ENCODE measurements at regions of chr6 and their contacts with region 1.

Region 1: GRCh38 chr6:72218125-72218524 is 331.8 kb downstream of the RIMS1 start:
- DNase-seq: peak; percentile 32
- H3K4me3 ChIP-seq: no peak overlapping the region
- H3K27ac ChIP-seq: no peak overlapping the region
- H3K4me1 ChIP-seq: no peaks in the 10 kb centered on the region
- H3K27me3 ChIP-seq: no peaks in the 10 kb centered on the region
- CTCF ChIP-seq: peak; percentile 19 to 62
- POLR2A ChIP-seq: no peak

Region 2: DNA sequence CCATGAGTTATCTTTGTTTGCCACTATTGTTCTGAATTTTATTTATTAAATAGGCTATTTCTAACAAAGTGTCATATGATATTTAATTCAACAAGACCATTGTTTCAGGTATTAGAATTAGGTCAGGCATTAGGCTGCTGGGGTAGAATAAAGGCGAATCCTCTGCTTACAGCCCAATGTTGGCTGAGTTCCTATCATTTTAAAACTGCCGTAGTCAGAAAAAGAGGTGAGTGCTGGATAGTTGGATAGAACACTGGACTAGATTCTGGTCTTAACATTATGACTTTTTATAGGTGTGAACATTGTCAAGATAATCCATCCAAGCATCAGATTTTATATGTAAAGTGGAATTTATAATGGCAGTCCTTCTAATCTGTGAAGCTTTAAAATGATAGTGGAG is 325.5 kb before region 1 on chr6:
- CTCF ChIA-PET with region 1: no interaction called
- POLR2A ChIA-PET with region 1: no interaction called
- dilution Hi-C with region 1: no loop called
- intact Hi-C with region 1: loop called (anchors 5 kb)
- DNase-seq: no peak
- H3K4me3 ChIP-seq: no peak overlapping the region
- H3K27ac ChIP-seq: no peak overlapping the region
- H3K4me1 ChIP-seq: no peaks in the 10 kb centered on the region
- H3K27me3 ChIP-seq: peaks cover 6 to 7% of the 10 kb centered on the region in 2 experiments
- CTCF ChIP-seq: no peak
- POLR2A ChIP-seq: no peak